GM18951 (cell line): ENCODE measurements at regions of chr1 and their contacts with region 1.

Region 1: DNA sequence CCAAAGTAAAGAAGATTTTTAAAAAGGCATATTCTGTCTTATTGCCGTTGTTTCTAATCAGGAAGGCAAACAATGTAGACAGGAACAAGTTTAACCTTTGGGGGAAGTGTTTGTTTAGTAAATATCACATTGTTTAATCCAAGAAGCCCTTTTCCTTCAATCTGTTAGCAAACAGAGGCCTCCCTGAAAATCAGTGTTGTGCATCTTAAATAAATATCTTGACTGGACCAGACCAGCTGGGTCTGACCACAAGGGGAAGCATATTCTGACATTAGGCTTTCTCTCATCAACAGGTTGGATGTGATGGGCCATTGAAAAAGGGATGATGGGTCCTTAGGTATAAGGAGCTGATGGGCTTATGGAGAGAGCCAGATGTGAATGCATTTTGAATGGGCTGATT is 81.8 kb upstream of the SGIP1 start:
- POLR2A ChIP-seq: no peak

Region 2: GRCh38 chr1:65958561-65959350 is 493.4 kb before region 1 on chr1:
- in situ Hi-C with region 1: loop called (anchors 10 kb)
- POLR2A ChIP-seq: no peak

Region 3: GRCh38 chr1:66108624-66109023 is 343.5 kb before region 1 on chr1:
- in situ Hi-C with region 1: no loop called
- POLR2A ChIP-seq: no peak

Region 4: GRCh38 chr1:66197785-66198184 is 254.4 kb before region 1 on chr1:
- in situ Hi-C with region 1: no loop called
- POLR2A ChIP-seq: no peak

Region 5: GRCh38 chr1:66253330-66253921 is 198.7 kb before region 1 on chr1:
- in situ Hi-C with region 1: no loop called
- POLR2A ChIP-seq: no peak